Activated T-helper 2 cell treated with anti-CD3 and anti-CD28 coated beads, Interferon-gamma antibody, Interleukin-2, Interleukin-4, amounts not matched to agents 10 μg/mL and 5 μg/mL and 100 μg/mL, durations not matched to agents 14 hours and 24 hours and 36 hours (primary cell): ENCODE measurements at regions of chr19 and their contacts with region 1.

Region 1: DNA sequence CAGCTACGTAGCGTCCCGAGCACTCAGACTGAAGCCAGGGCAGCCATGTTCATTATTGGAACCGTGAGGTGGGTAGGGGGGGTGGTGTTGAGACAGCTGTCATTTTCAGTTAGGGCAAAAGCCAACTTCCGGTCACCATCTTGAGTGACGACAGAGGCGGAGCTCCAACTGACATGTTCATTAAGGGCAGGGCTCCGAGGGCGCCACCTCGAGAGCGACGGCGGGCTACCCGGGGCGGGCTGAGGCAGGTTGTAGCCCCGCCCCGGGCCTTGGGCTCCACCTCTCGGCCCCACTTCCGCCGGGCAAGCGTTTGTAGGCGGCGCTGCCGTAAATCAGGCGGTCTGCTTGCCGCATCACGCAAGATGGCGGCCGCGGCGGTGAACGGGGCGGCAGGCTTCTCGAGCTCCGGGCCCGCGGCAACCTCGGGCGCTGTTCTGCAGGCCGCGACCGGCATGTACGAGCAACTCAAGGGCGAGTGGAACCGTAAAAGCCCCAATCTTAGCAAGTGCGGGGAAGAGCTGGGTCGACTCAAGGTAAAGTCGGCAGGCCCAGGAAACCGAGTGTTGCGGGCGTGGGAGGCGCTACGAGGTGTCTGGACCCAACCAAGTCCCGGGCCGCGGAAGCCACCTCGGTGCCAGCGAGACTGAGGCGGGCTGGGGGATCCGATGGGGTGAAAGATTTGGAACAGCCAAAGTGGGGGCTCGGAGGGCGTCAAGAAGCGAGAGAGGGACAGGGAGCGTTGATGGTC is at the start of gene PSMD8:
- DNase-seq: peak; percentile 98
- H3K4me3 Mint-ChIP-seq: peak within 1 kb of the TSS; percentile 100
- H3K27ac Mint-ChIP-seq: peak within 1 kb of the TSS; percentile 98
- H3K4me1 Mint-ChIP-seq: peaks cover 23% of the 10 kb centered on the region
- H3K27me3 Mint-ChIP-seq: no peaks in the 10 kb centered on the region
- total RNA-seq, gene PSMD8: 286 and 299 TPM in 2 replicates

Region 2: DNA sequence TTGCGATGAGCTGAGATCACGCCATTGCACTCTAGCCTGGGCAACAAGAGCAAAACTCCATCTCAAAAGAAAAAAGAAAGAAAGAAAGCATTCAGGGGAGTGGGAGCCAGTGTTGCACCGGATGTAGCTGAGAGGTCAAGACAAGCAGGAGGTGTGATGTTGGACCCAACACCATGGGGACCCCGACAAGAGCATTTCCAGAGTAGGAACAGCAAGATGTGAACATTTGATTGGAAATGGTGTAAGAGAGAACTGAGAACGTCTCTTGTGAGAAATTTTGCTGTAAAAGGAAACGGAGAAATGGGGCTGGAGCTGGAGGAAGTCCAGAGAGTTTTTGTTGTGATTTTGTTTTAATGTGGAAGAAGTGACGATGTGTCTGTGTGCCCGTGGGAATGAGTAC is 134.8 kb before region 1 on chr19:
- intact Hi-C with region 1: loop called (anchors 5 kb)
- DNase-seq: no peak
- H3K4me3 Mint-ChIP-seq: no peak overlapping the region
- H3K27ac Mint-ChIP-seq: no peak overlapping the region
- H3K4me1 Mint-ChIP-seq: peaks cover 5% of the 10 kb centered on the region
- H3K27me3 Mint-ChIP-seq: no peaks in the 10 kb centered on the region

Region 3: GRCh38 chr19:38277969-38278680 is 96.5 kb before region 1 on chr19:
- intact Hi-C with region 1: no loop called
- DNase-seq: no peak
- H3K4me3 Mint-ChIP-seq: no peak overlapping the region
- H3K27ac Mint-ChIP-seq: peak overlapping the region; percentile 46
- H3K4me1 Mint-ChIP-seq: peaks cover 24% of the 10 kb centered on the region
- H3K27me3 Mint-ChIP-seq: no peaks in the 10 kb centered on the region

Region 4: GRCh38 chr19:38335949-38336637 is 38.5 kb before region 1 on chr19:
- intact Hi-C with region 1: loop called (anchors 1 kb)
- DNase-seq: peak; percentile 95
- H3K4me3 Mint-ChIP-seq: peak overlapping the region; percentile 95
- H3K27ac Mint-ChIP-seq: peak overlapping the region; percentile 100
- H3K4me1 Mint-ChIP-seq: peaks cover 7% of the 10 kb centered on the region
- H3K27me3 Mint-ChIP-seq: no peaks in the 10 kb centered on the region

Region 5: DNA sequence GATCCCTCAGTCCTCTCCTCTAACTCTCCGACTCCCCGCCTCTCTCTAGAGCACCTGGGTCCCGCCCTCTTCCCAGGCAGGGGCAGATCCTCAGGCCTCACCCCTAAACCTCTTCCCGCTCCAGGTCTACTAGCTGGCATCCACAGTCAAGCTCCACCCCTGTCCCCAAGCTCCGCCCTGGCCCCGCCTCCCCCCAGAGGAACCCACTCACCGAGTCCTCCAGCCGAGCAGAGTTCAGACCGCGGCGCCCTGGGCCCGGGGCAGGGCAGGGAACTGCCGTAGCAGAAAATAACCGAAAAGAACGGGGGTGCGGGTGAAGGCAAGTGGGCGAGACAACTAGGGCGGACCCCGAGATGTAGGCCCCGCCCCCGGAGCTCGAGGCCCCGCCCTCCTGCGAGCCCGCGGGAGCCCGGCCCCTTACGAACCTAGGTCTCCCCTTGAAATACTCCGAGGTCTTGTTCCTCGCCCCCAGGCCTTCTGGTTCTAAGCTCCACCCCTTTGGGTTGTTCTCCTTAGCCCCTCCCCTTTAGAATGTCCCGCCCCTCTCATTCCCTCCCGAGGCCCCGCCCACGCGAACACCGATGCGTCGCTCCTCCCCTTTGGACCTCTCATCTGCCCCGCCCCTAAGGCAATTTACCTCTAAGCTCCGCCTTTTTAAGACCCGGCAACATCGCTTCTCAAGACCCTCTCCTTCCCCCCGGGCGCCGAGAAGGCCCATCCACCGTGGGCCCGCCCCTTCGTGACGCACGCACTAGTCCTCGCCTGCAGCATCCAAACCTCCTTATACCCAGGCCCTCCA is 13.1 kb after region 1 on chr19 and contains the start of gene GGN:
- intact Hi-C with region 1: loop called (anchors 1 kb)
- DNase-seq: peak; percentile 77
- H3K4me3 Mint-ChIP-seq: peak within 1 kb of the TSS; percentile 85
- H3K27ac Mint-ChIP-seq: peak within 1 kb of the TSS; percentile 54
- H3K4me1 Mint-ChIP-seq: peaks cover 11% of the 10 kb centered on the region
- H3K27me3 Mint-ChIP-seq: peaks cover 21% of the 10 kb centered on the region
- total RNA-seq, gene GGN: 0.71 TPM in 1 of 2 replicates, not detected in the other

Region 6: GRCh38 chr19:39341719-39342604 is 967.4 kb after region 1 on chr19 and contains the start of gene SAMD4B:
- intact Hi-C with region 1: loop called (anchors 10 kb)
- DNase-seq: peak; percentile 99
- H3K4me3 Mint-ChIP-seq: peak within 1 kb of the TSS; percentile 96
- H3K27ac Mint-ChIP-seq: peak within 1 kb of the TSS; percentile 94
- H3K4me1 Mint-ChIP-seq: peaks cover 59% of the 10 kb centered on the region
- H3K27me3 Mint-ChIP-seq: no peaks in the 10 kb centered on the region
- total RNA-seq, gene SAMD4B: 64.0 TPM in 2 replicates